Endothelial cell of umbilical vein (primary cell): ENCODE measurements at regions of chr6 and their contacts with region 1.

Region 1: DNA sequence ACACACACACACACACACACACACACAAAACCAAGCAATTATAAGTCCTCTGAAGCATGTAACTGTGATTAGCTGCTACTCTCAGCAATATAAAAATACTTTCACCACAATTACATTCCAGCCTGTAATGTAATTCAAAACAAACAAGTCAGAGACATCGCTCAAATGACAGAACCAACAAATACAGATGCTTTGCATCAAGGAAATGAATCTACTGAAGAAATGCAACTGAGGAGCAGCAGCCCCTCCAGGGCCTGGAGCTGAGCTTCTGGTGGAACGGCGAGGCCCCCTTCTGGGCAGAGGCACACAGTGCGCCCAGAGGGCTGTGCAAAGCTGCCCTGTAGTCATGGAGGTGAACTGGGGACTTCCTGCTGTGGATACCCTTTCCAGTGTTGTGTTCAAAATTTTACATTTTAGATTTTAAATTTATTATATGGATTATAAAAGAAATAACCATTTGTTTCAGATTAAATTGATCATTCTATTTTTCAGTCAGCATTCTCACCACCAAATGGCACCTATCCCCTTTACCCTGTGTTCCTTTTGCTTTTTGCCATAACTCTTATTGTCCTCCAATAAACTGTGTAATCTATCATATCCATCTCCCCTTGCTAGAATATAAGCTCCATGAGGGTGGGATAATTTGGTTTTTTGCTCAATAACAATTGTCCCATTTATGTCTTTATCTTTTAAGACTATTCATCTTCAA is 23.2 kb downstream of the ADAT2 start:
- DNase-seq: peak; percentile 66
- H3K4me3 ChIP-seq: no peak overlapping the region
- H3K27ac ChIP-seq: no peak overlapping the region
- H3K4me1 ChIP-seq: no peaks in the 10 kb centered on the region
- H3K27me3 ChIP-seq: no peaks in the 10 kb centered on the region
- CTCF ChIP-seq: peak; percentile 93 to 96
- POLR2A ChIP-seq: no peak

Region 2: DNA sequence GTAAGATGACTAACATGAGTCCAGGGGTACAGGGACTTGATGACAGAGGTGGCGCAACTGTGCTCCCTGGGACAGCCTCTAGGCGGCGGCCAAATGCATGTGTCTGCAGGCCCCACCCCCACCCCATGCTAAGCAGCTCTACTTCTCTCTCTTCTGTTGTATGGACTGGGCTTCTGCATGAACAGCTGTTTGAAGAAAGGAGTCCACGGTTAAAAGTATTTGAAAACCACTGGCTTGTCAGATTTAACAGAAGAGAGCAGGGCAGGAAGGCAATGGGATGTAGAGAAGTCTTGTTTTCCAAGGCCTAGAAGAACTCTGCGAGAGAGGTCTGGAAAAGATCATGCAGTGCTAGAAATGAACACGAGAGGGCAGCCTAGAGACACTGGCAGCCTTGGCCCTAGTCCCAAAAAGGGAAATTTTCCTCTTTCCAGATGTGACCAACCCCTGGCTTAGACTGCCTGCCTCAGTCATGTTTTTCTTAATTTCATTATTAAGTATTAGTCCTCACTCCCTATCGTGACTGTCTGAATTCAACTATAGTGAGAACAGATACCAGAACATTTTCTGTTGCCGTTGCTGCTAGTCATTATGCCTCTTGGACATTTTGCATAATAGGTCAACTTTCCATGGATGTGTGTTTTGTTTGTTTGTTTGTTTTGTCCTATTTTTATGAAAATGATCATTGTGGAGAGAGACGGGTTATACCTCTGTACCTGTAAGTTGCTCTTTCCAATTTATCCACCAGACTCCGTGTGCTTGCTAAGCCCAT is 860.5 kb before region 1 on chr6:
- CTCF ChIA-PET with region 1: interaction called, 23 read pairs
- POLR2A ChIA-PET with region 1: no interaction called
- dilution Hi-C with region 1: no loop called
- intact Hi-C with region 1: loop called (anchors 1 kb)
- DNase-seq: peak; percentile 62
- H3K4me3 ChIP-seq: no peak overlapping the region
- H3K27ac ChIP-seq: no peak overlapping the region
- H3K4me1 ChIP-seq: no peaks in the 10 kb centered on the region
- H3K27me3 ChIP-seq: peaks cover 2 to 16% of the 10 kb centered on the region in 2 experiments
- CTCF ChIP-seq: peak; percentile 82 to 85
- POLR2A ChIP-seq: no peak

Region 3: DNA sequence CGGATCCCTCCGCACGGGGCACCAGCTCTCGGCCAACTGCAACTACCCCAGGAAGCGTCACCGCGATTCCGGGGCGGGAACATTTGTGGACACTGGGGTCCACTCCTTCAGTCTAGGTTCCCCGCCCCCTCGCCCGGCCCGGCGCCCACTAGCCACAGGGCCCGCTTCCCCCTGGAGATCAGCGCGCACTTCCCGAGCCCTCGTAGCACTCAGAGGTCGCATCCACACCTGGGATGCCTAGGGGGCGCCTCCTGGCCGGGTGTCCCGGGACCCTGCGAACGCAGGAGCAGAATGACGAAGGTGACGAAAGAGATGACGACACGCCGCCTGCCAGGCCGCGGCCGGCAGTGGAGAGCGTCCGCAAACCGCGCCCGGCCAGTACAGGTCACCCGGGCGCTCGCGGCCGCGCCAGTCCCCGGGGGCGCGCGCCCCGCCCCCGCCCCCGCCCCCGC is 366.9 kb before region 1 on chr6:
- CTCF ChIA-PET with region 1: interaction called, 4 read pairs
- POLR2A ChIA-PET with region 1: no interaction called
- dilution Hi-C with region 1: no loop called
- intact Hi-C with region 1: loop called (anchors 10 kb)
- DNase-seq: peak; percentile 82
- H3K4me3 ChIP-seq: peak overlapping the region; percentile 35 to 76 (median 67)
- H3K27ac ChIP-seq: peak overlapping the region; percentile 83
- H3K4me1 ChIP-seq: peaks cover 10% of the 10 kb centered on the region
- H3K27me3 ChIP-seq: no peaks in the 10 kb centered on the region
- CTCF ChIP-seq: peak in 1 of 2 donors; percentile 15
- POLR2A ChIP-seq: no peak

Region 4: DNA sequence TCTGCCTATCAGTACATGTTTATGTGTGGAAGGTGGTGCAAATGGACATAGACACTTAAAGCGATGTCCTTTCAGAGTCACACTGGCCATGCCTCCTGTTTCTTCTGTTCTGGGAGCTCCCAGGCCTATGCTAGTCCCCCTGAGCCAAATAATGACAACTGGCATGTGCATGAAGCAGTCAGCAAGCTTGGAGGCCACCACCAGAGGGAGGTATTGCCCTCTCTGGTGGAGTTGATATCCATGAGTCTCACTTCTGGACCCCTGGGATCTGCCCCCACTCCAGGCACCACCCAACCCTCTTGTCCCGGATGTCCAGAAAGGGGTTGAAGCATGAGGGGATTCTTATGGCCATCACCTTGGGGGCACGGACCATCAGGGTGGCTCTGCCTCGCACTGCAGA is 194.4 kb before region 1 on chr6:
- CTCF ChIA-PET with region 1: interaction called, 105 read pairs
- POLR2A ChIA-PET with region 1: no interaction called
- dilution Hi-C with region 1: no loop called
- intact Hi-C with region 1: loop called (anchors 1 kb)
- DNase-seq: peak; percentile 44
- H3K4me3 ChIP-seq: no peak overlapping the region
- H3K27ac ChIP-seq: no peak overlapping the region
- H3K4me1 ChIP-seq: no peaks in the 10 kb centered on the region
- H3K27me3 ChIP-seq: no peaks in the 10 kb centered on the region
- CTCF ChIP-seq: peak; percentile 52 to 65
- POLR2A ChIP-seq: no peak

Region 5: DNA sequence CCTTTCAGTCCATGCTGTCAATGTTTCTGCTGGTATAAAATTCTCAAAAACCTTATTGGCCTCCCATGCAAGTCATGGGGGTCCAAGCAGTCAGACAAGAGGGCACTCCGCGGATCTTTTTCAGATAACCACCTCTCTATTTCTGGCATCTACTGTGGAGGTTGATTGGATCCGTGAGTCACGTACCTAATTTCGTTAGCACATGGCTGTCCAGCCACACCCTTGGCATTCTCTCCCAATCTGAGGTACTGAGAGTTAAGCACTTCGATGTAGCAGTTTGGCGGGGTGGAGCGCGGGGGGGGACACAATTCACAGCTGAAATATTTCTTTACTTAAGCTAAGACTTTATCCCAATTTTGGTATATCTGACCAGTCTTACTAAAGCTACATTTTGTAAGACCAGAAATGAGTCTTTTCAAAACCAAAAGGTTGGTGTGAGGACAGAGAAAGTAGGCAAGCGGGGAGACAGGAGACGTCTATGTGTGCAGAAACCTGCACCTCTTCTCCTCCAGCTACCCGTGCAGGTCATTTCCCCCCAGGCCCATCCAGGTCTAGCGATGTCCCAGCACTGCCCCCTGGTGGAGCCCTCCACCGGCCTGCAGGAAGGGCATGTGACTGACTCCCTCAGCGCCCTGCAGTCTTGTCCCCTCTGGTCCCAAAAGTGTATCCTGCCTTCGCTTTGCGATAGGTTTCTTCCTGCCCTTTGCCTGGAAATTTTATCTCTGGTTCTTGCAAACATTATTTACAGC is 89.9 kb before region 1 on chr6:
- CTCF ChIA-PET with region 1: interaction called, 11 read pairs
- POLR2A ChIA-PET with region 1: no interaction called
- dilution Hi-C with region 1: no loop called
- intact Hi-C with region 1: no loop called
- DNase-seq: peak; percentile 31
- H3K4me3 ChIP-seq: no peak overlapping the region
- H3K27ac ChIP-seq: no peak overlapping the region
- H3K4me1 ChIP-seq: no peaks in the 10 kb centered on the region
- H3K27me3 ChIP-seq: no peaks in the 10 kb centered on the region
- CTCF ChIP-seq: peak; percentile 63 to 73
- POLR2A ChIP-seq: no peak